Naive thymus-derived CD4-positive, alpha-beta T cell (primary cell): ENCODE measurements at regions of chr2 and their contacts with region 1.

Region 1: GRCh38 chr2:168490015-168490874 is 34.2 kb downstream of the CERS6 start:
- DNase-seq: peak in 8 of 9 donors; percentile 38 to 62 (median 44)
- ATAC-seq: peak; percentile 85
- H3K4me3 ChIP-seq: peak overlapping the region; percentile 42
- H3K4me3 Mint-ChIP-seq: peak overlapping the region; percentile 65 to 90 (median 74)
- H3K27ac ChIP-seq: peak overlapping the region; percentile 55
- H3K27ac Mint-ChIP-seq: peak overlapping the region; percentile 77 to 91 (median 88)
- H3K4me1 ChIP-seq: peaks cover 11 to 23% of the 10 kb centered on the region in 2 donors
- H3K4me1 Mint-ChIP-seq: peaks cover 24 to 87% (median 65%) of the 10 kb centered on the region in 7 donors
- H3K27me3 ChIP-seq: no peaks in the 10 kb centered on the region
- H3K27me3 Mint-ChIP-seq: peaks cover 0 to 3% (median 0%) of the 10 kb centered on the region in 5 donors

Region 2: GRCh38 chr2:168311261-168311910 is 178.9 kb before region 1 on chr2:
- CTCF ChIA-PET with region 1: no interaction called
- POLR2A ChIA-PET with region 1: no interaction called
- intact Hi-C with region 1: no loop called
- DNase-seq: no peak
- ATAC-seq: no peak
- H3K4me3 ChIP-seq: no peak overlapping the region
- H3K4me3 Mint-ChIP-seq: no peak overlapping the region
- H3K27ac ChIP-seq: no peak overlapping the region
- H3K27ac Mint-ChIP-seq: no peak overlapping the region
- H3K4me1 ChIP-seq: no peaks in the 10 kb centered on the region
- H3K4me1 Mint-ChIP-seq: no peaks in the 10 kb centered on the region
- H3K27me3 ChIP-seq: no peaks in the 10 kb centered on the region
- H3K27me3 Mint-ChIP-seq: peaks cover 0 to 5% (median 0%) of the 10 kb centered on the region in 5 donors

Region 3: GRCh38 chr2:168355121-168355520 is 135.1 kb before region 1 on chr2:
- CTCF ChIA-PET with region 1: no interaction called
- POLR2A ChIA-PET with region 1: no interaction called
- intact Hi-C with region 1: loop called in 1 of 2 experiments (anchors 2 kb)
- DNase-seq: no peak
- ATAC-seq: no peak
- H3K4me3 ChIP-seq: no peak overlapping the region
- H3K4me3 Mint-ChIP-seq: peak overlapping the region in 7 of 10 donors; percentile 9 to 70 (median 16)
- H3K27ac ChIP-seq: no peak overlapping the region
- H3K27ac Mint-ChIP-seq: peak overlapping the region in 5 of 9 donors; percentile 1 to 86 (median 16)
- H3K4me1 ChIP-seq: peaks cover 0 to 15% of the 10 kb centered on the region in 2 donors
- H3K4me1 Mint-ChIP-seq: peaks cover 18 to 48% (median 37%) of the 10 kb centered on the region in 7 donors
- H3K27me3 ChIP-seq: no peaks in the 10 kb centered on the region
- H3K27me3 Mint-ChIP-seq: peaks cover 0 to 25% (median 0%) of the 10 kb centered on the region in 5 donors

Region 4: GRCh38 chr2:168434146-168434545 is 56.1 kb before region 1 on chr2:
- CTCF ChIA-PET with region 1: interaction called, 4 read pairs
- POLR2A ChIA-PET with region 1: interaction called, 3 read pairs
- intact Hi-C with region 1: loop called (anchors 1 to 2 kb)
- DNase-seq: no peak
- ATAC-seq: no peak
- H3K4me3 ChIP-seq: no peak overlapping the region
- H3K4me3 Mint-ChIP-seq: peak overlapping the region in 4 of 10 donors; percentile 34 to 78 (median 70)
- H3K27ac ChIP-seq: no peak overlapping the region
- H3K27ac Mint-ChIP-seq: peak overlapping the region in 5 of 9 donors; percentile 6 to 94 (median 48)
- H3K4me1 ChIP-seq: peaks cover 6 to 59% of the 10 kb centered on the region in 2 donors
- H3K4me1 Mint-ChIP-seq: peaks cover 31 to 94% (median 70%) of the 10 kb centered on the region in 7 donors
- H3K27me3 ChIP-seq: no peaks in the 10 kb centered on the region
- H3K27me3 Mint-ChIP-seq: no peaks in the 10 kb centered on the region

Region 5: DNA sequence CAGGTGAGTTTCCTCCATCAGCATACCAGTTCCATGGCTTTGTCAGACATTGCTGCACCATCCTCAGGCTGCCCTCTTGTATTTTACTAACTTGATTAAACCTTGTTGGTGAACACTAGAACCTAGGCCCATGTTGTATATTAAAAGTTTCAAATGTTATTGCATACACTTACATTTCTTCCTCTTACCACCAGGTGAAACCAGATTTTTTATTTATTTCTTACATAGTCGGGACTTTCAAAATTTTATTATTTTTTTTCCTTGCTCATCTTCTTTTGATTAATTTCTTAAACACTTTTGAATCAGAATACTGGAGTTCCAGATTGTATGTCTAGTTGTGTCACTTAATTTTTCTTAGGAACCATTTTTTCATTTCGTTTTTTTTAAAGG is 28.3 kb before region 1 on chr2:
- CTCF ChIA-PET with region 1: no interaction called
- POLR2A ChIA-PET with region 1: interaction called, 4 read pairs
- intact Hi-C with region 1: loop called (anchors 1 kb)
- DNase-seq: no peak
- ATAC-seq: no peak
- H3K4me3 ChIP-seq: no peak overlapping the region
- H3K4me3 Mint-ChIP-seq: peak overlapping the region in 3 of 10 donors; percentile 4 to 40 (median 23)
- H3K27ac ChIP-seq: no peak overlapping the region
- H3K27ac Mint-ChIP-seq: peak overlapping the region in 2 of 9 donors; percentile 9 to 65
- H3K4me1 ChIP-seq: peaks cover 0 to 34% of the 10 kb centered on the region in 2 donors
- H3K4me1 Mint-ChIP-seq: peaks cover 45 to 83% (median 73%) of the 10 kb centered on the region in 7 donors
- H3K27me3 ChIP-seq: no peaks in the 10 kb centered on the region
- H3K27me3 Mint-ChIP-seq: no peaks in the 10 kb centered on the region

Region 6: GRCh38 chr2:168470320-168471162 is 19.7 kb before region 1 on chr2:
- CTCF ChIA-PET with region 1: interaction called, 4 read pairs
- POLR2A ChIA-PET with region 1: interaction called, 5 read pairs
- intact Hi-C with region 1: loop called in 1 of 2 experiments (anchors 2 kb)
- DNase-seq: no peak
- ATAC-seq: peak; percentile 20
- H3K4me3 ChIP-seq: no peak overlapping the region
- H3K4me3 Mint-ChIP-seq: peak overlapping the region in 5 of 10 donors; percentile 22 to 65 (median 37)
- H3K27ac ChIP-seq: no peak overlapping the region
- H3K27ac Mint-ChIP-seq: peak overlapping the region in 8 of 9 donors; percentile 4 to 84 (median 40)
- H3K4me1 ChIP-seq: peaks cover 0 to 32% of the 10 kb centered on the region in 2 donors
- H3K4me1 Mint-ChIP-seq: peaks cover 41 to 94% (median 88%) of the 10 kb centered on the region in 7 donors
- H3K27me3 ChIP-seq: no peaks in the 10 kb centered on the region
- H3K27me3 Mint-ChIP-seq: no peaks in the 10 kb centered on the region

Region 7: GRCh38 chr2:168583064-168583709 is 92.9 kb after region 1 on chr2:
- CTCF ChIA-PET with region 1: no interaction called
- POLR2A ChIA-PET with region 1: no interaction called
- intact Hi-C with region 1: loop called (anchors 5 to 10 kb)
- DNase-seq: no peak
- ATAC-seq: peak; percentile 50
- H3K4me3 ChIP-seq: no peak overlapping the region
- H3K4me3 Mint-ChIP-seq: peak overlapping the region; percentile 11 to 74 (median 48)
- H3K27ac ChIP-seq: no peak overlapping the region
- H3K27ac Mint-ChIP-seq: peak overlapping the region; percentile 9 to 93 (median 63)
- H3K4me1 ChIP-seq: peaks cover 0 to 26% of the 10 kb centered on the region in 2 donors
- H3K4me1 Mint-ChIP-seq: peaks cover 38 to 80% (median 69%) of the 10 kb centered on the region in 7 donors
- H3K27me3 ChIP-seq: no peaks in the 10 kb centered on the region
- H3K27me3 Mint-ChIP-seq: no peaks in the 10 kb centered on the region

Region 8: DNA sequence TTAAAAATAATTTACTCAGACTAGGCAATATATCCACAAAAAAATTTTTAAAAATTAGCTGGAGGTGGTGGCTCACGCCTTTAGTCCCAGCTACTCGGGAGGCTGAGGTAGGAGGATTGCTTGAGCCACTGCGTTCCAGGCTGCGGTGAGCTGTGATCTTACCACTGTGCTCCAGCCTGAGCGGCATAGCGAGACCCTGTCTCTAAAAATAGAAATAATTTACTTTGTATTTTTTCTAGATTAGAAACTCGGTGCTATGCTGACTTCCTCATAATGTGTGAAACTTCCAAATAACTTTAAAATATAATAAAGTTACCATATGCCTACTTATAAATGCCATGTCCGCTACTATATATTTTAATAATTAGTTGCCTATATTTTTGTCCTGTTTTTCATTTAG is 1100.6 kb after region 1 on chr2:
- CTCF ChIA-PET with region 1: no interaction called
- POLR2A ChIA-PET with region 1: no interaction called
- intact Hi-C with region 1: no loop called
- DNase-seq: no peak
- ATAC-seq: no peak
- H3K4me3 ChIP-seq: no peak overlapping the region
- H3K4me3 Mint-ChIP-seq: peak overlapping the region in 2 of 10 donors; percentile 8 to 51
- H3K27ac ChIP-seq: no peak overlapping the region
- H3K27ac Mint-ChIP-seq: peak overlapping the region in 1 of 9 donors; percentile 45
- H3K4me1 ChIP-seq: peaks cover 14 to 27% of the 10 kb centered on the region in 2 donors
- H3K4me1 Mint-ChIP-seq: peaks cover 23 to 82% (median 52%) of the 10 kb centered on the region in 7 donors
- H3K27me3 ChIP-seq: no peaks in the 10 kb centered on the region
- H3K27me3 Mint-ChIP-seq: no peaks in the 10 kb centered on the region